ENCODE measurements at regions of chr14 and their contacts with region 1.

Region 1: GRCh38 chr14:22570132-22570949 is 18.7 kb downstream of the DAD1 start:
- DNase-seq: peak; percentile 53
- ATAC-seq: peak; percentile 88
- H3K4me3 Mint-ChIP-seq: peak overlapping the region; percentile 74
- H3K27ac Mint-ChIP-seq: peak overlapping the region; percentile 94
- H3K4me1 Mint-ChIP-seq: peaks cover 53% of the 10 kb centered on the region
- H3K27me3 Mint-ChIP-seq: no peaks in the 10 kb centered on the region
- CTCF ChIP-seq: peak; percentile 76

Region 2: DNA sequence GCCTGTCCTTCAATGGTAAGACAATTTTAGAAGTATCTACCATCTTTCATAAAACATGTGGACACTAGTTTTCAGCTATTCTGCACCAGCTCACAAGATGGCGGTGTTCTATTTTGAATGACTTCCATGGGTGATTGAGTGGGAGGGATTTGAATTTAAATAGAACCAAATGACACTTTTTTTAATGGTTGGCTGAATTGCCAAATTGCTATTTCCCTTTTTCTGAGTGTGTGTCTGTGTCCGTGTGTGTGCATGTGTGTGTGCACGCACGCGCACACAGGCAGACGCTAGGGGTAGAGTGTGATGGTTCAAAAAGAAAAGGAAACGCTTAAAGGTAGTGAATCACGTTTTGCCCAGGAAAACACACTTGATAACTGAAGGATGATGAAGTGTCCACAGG is 344.0 kb before region 1 on chr14:
- CTCF ChIA-PET with region 1: interaction called, 6 read pairs
- POLR2A ChIA-PET with region 1: no interaction called
- intact Hi-C with region 1: loop called (anchors 1 kb)
- DNase-seq: no peak
- ATAC-seq: peak; percentile 85
- H3K4me3 Mint-ChIP-seq: peak overlapping the region; percentile 64
- H3K27ac Mint-ChIP-seq: peak overlapping the region; percentile 81
- H3K4me1 Mint-ChIP-seq: peaks cover 53% of the 10 kb centered on the region
- H3K27me3 Mint-ChIP-seq: peaks cover 8% of the 10 kb centered on the region
- CTCF ChIP-seq: no peak

Region 3: DNA sequence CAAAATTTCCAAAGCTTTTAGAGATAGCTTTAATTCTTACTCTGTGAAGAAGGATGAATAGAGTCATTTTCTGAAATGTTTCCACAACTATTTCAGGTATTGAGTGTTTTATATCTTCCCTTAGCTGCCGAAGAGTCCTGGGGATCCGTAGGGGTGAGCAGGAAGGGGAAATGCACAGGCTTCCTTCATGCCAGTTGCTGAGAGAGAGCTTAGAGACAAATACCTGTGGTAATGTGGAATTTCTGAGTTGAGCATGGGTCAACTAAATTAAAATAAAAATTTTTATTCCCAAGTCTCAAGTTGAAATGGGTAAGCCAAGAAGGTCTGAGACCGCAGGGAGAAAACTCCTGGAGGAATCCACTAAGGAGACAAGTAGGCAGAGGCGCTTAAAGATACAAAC is 167.1 kb before region 1 on chr14:
- CTCF ChIA-PET with region 1: interaction called, 12 read pairs
- POLR2A ChIA-PET with region 1: no interaction called
- intact Hi-C with region 1: no loop called
- DNase-seq: no peak
- ATAC-seq: no peak
- H3K4me3 Mint-ChIP-seq: no peak overlapping the region
- H3K27ac Mint-ChIP-seq: no peak overlapping the region
- H3K4me1 Mint-ChIP-seq: no peaks in the 10 kb centered on the region
- H3K27me3 Mint-ChIP-seq: peaks cover 2% of the 10 kb centered on the region
- CTCF ChIP-seq: no peak

Region 4: GRCh38 chr14:22531451-22532344 is 38.6 kb before region 1 on chr14:
- CTCF ChIA-PET with region 1: interaction called, 17 read pairs
- POLR2A ChIA-PET with region 1: interaction called, 11 read pairs
- intact Hi-C with region 1: no loop called
- DNase-seq: no peak
- ATAC-seq: peak; percentile 79
- H3K4me3 Mint-ChIP-seq: peak overlapping the region; percentile 80
- H3K27ac Mint-ChIP-seq: peak overlapping the region; percentile 93
- H3K4me1 Mint-ChIP-seq: peaks cover 76% of the 10 kb centered on the region
- H3K27me3 Mint-ChIP-seq: no peaks in the 10 kb centered on the region
- CTCF ChIP-seq: no peak

Region 5: GRCh38 chr14:22653012-22653621 is 82.8 kb after region 1 on chr14:
- CTCF ChIA-PET with region 1: interaction called, 36 read pairs
- POLR2A ChIA-PET with region 1: interaction called, 3 read pairs
- intact Hi-C with region 1: loop called (anchors 1 kb)
- DNase-seq: no peak
- ATAC-seq: peak; percentile 78
- H3K4me3 Mint-ChIP-seq: no peak overlapping the region
- H3K27ac Mint-ChIP-seq: no peak overlapping the region
- H3K4me1 Mint-ChIP-seq: no peaks in the 10 kb centered on the region
- H3K27me3 Mint-ChIP-seq: no peaks in the 10 kb centered on the region
- CTCF ChIP-seq: no peak

Region 6: DNA sequence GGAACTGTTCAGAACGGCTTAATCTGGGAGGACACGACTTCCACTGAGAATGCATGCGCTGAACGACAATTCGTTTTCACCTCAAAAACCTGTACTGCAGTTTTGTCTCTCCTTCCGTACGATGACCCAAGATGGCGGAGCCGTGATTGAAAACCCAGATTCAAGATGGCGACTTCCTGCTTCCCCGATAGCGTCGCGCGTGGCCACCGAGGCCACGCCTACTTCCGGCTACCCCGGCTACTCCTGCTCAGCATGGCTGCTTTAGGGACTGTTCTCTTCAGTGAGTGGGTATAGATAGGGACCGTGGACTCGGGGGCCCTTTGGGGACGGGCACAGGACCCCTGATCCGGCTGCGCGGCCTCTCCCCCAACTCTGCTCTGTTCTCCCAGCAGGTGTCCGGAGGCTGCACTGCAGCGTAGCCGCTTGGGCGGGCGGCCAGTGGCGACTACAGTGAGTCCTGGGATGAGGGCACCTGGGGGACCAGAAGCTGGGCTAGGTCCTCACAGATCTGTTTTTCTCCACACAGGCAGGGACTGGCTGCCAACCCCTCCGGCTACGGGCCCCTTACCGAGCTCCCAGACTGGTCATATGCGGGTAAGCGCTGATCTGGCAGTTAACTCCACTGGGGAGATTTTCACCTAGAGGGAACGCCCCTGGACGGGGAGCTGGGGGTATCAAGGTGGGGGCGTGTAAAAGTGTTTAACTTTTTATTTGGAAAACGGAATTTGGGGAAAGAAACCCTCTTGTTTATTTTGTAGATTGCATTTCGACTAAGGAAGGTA is 259.5 kb after region 1 on chr14 and contains the start of gene MRPL52:
- CTCF ChIA-PET with region 1: interaction called, 10 read pairs
- POLR2A ChIA-PET with region 1: interaction called, 4 read pairs
- intact Hi-C with region 1: no loop called
- DNase-seq: peak; percentile 76
- ATAC-seq: peak; percentile 94
- H3K4me3 Mint-ChIP-seq: peak within 1 kb of the TSS; percentile 93
- H3K27ac Mint-ChIP-seq: peak within 1 kb of the TSS; percentile 97
- H3K4me1 Mint-ChIP-seq: peaks cover 27% of the 10 kb centered on the region
- H3K27me3 Mint-ChIP-seq: no peaks in the 10 kb centered on the region
- CTCF ChIP-seq: no peak
- total RNA-seq, gene MRPL52: 142 and 150 TPM in 2 replicates

Region 7: GRCh38 chr14:23057757-23058653 is 487.7 kb after region 1 on chr14:
- CTCF ChIA-PET with region 1: interaction called, 11 read pairs
- POLR2A ChIA-PET with region 1: interaction called, 5 read pairs
- intact Hi-C with region 1: loop called (anchors 1 kb)
- DNase-seq: peak; percentile 80
- ATAC-seq: peak; percentile 73
- H3K4me3 Mint-ChIP-seq: peak overlapping the region; percentile 88
- H3K27ac Mint-ChIP-seq: no peak overlapping the region
- H3K4me1 Mint-ChIP-seq: peaks cover 18% of the 10 kb centered on the region
- H3K27me3 Mint-ChIP-seq: peaks cover 2% of the 10 kb centered on the region
- CTCF ChIP-seq: peak; percentile 58

Measured in activated B cell treated with CpG ODN at 0.5 μM for 24 hours (primary cell).